Activated B cell treated with CpG ODN at 0.5 μM for 24 hours (primary cell): ENCODE measurements at regions of chr2 and their contacts with region 1.

Region 1: DNA sequence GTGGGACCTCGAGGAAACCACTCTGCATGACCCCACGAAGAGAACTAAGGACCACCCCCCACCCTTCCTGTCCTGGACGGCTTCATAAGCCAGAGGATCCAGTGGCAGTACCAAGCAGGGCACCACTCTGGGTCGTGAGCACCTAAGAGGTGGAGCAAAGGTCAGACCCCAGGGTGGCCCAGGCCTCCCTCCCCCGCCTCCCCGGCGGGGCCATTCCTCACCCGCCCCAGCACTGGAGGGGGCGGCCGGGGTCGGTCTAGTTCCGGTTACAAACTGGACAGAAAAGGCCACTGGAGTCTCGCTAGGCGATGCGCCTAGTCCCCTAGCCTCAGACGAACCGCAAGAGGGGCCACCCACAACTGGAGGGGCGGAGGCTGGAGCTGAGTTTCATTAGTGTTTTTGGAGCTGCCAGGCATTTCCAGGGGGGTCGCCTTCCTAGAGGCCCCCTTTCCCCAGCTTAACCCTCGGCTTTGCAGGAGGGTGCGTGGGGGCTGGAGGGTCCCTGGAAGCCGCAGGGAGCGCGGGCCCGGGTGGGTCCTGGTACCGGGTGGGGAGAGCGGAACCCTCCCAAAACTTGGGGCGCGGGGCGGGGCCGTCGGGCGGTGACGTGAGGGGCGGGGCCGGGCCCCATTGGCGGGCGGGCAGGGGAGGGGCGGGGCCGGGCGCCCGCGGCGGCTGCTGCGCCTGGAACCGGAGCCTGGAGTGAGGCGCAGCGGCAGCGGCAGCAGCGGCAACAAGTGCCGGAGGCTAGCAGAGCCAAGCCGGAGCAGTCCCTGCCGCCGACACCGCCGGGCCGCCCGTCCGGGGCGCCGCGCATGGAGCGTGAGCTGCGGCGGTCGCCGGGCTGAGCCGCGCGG is at the start of gene B3GNT2:
- DNase-seq: peak; percentile 81
- ATAC-seq: peak; percentile 81
- H3K4me3 Mint-ChIP-seq: peak within 1 kb of the TSS; percentile 92
- H3K27ac Mint-ChIP-seq: peak within 1 kb of the TSS; percentile 89
- H3K4me1 Mint-ChIP-seq: peaks cover 38% of the 10 kb centered on the region
- H3K27me3 Mint-ChIP-seq: no peaks in the 10 kb centered on the region
- CTCF ChIP-seq: no peak
- total RNA-seq, gene B3GNT2: 34.0 and 34.9 TPM in 2 replicates

Region 2: GRCh38 chr2:61109291-61109690 is 1086.4 kb before region 1 on chr2:
- CTCF ChIA-PET with region 1: no interaction called
- POLR2A ChIA-PET with region 1: no interaction called
- intact Hi-C with region 1: no loop called
- DNase-seq: no peak
- ATAC-seq: no peak
- H3K4me3 Mint-ChIP-seq: no peak overlapping the region
- H3K27ac Mint-ChIP-seq: no peak overlapping the region
- H3K4me1 Mint-ChIP-seq: no peaks in the 10 kb centered on the region
- H3K27me3 Mint-ChIP-seq: no peaks in the 10 kb centered on the region
- CTCF ChIP-seq: no peak

Region 3: DNA sequence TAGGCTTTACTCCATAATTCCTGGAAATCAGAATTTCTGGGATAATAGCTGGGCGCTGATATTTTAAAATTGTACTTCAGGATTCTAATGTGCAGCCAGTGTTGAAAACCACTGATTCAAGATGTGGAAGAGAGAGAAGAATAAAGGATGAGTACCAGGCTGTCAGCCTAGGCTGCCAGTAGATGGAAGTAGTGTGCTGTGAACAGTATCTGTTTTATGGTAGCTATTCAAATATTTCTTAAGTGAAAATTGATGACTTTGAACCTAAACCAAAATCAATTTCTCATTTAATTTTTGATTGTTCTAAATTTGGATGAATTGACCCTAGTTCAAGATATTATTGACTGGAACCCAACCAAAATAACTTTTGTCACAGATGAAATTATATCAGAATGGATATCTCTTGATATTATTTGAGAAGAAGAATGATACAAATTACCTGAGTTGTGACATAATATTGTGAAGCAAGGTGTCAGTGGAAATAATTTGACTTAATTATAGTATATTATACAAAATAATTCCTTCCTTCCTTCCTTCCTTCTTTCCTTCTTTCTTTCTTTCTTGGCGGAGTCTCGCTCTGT is 202.1 kb before region 1 on chr2:
- CTCF ChIA-PET with region 1: interaction called, 5 read pairs
- POLR2A ChIA-PET with region 1: interaction called, 4 read pairs
- intact Hi-C with region 1: loop called (anchors 2 kb)
- DNase-seq: no peak
- ATAC-seq: peak; percentile 75
- H3K4me3 Mint-ChIP-seq: no peak overlapping the region
- H3K27ac Mint-ChIP-seq: no peak overlapping the region
- H3K4me1 Mint-ChIP-seq: peaks cover 2% of the 10 kb centered on the region
- H3K27me3 Mint-ChIP-seq: no peaks in the 10 kb centered on the region
- CTCF ChIP-seq: no peak

Region 4: GRCh38 chr2:62145478-62146100 is 50.1 kb before region 1 on chr2:
- CTCF ChIA-PET with region 1: no interaction called
- POLR2A ChIA-PET with region 1: interaction called, 4 read pairs
- intact Hi-C with region 1: loop called (anchors 1 kb)
- DNase-seq: no peak
- ATAC-seq: peak; percentile 51
- H3K4me3 Mint-ChIP-seq: peak overlapping the region; percentile 28
- H3K27ac Mint-ChIP-seq: peak overlapping the region; percentile 57
- H3K4me1 Mint-ChIP-seq: peaks cover 53% of the 10 kb centered on the region
- H3K27me3 Mint-ChIP-seq: no peaks in the 10 kb centered on the region
- CTCF ChIP-seq: no peak

Region 5: GRCh38 chr2:62340994-62341484 is 145.4 kb after region 1 on chr2:
- CTCF ChIA-PET with region 1: no interaction called
- POLR2A ChIA-PET with region 1: interaction called, 7 read pairs
- intact Hi-C with region 1: loop called (anchors 1 kb)
- DNase-seq: no peak
- ATAC-seq: no peak
- H3K4me3 Mint-ChIP-seq: no peak overlapping the region
- H3K27ac Mint-ChIP-seq: no peak overlapping the region
- H3K4me1 Mint-ChIP-seq: peaks cover 18% of the 10 kb centered on the region
- H3K27me3 Mint-ChIP-seq: no peaks in the 10 kb centered on the region
- CTCF ChIP-seq: no peak

Region 6: GRCh38 chr2:63588385-63589147 is 1392.9 kb after region 1 on chr2 and contains the starts of genes MDH1 and WDPCP:
- CTCF ChIA-PET with region 1: no interaction called
- POLR2A ChIA-PET with region 1: no interaction called
- intact Hi-C with region 1: loop called (anchors 2 kb)
- DNase-seq: peak; percentile 80
- ATAC-seq: peak; percentile 86
- H3K4me3 Mint-ChIP-seq: peak within 1 kb of the TSS; percentile 97
- H3K27ac Mint-ChIP-seq: peak within 1 kb of the TSS; percentile 97
- H3K4me1 Mint-ChIP-seq: peaks cover 47% of the 10 kb centered on the region
- H3K27me3 Mint-ChIP-seq: no peaks in the 10 kb centered on the region
- CTCF ChIP-seq: no peak
- total RNA-seq, gene MDH1: 117 and 120 TPM in 2 replicates
- total RNA-seq, gene WDPCP: 10.0 and 12.9 TPM in 2 replicates